Activated CD8-positive, alpha-beta T cell treated with anti-CD3 and anti-CD28 coated beads, Interleukin-2, amount 10 ng/mL, durations not matched to agents 7 days and 5 days (primary cell): ENCODE measurements at regions of chr7 and their contacts with region 1.

Region 1: GRCh38 chr7:99918959-99919813 is at the start of gene TRIM4:
- DNase-seq: peak; percentile 93
- ATAC-seq: peak; percentile 98
- H3K4me3 Mint-ChIP-seq: peak within 1 kb of the TSS; percentile 97
- H3K27ac Mint-ChIP-seq: peak within 1 kb of the TSS; percentile 98
- H3K4me1 Mint-ChIP-seq: peaks cover 40% of the 10 kb centered on the region
- H3K27me3 Mint-ChIP-seq: no peaks in the 10 kb centered on the region
- total RNA-seq, gene TRIM4: 26.7 to 28.0 TPM

Region 2: DNA sequence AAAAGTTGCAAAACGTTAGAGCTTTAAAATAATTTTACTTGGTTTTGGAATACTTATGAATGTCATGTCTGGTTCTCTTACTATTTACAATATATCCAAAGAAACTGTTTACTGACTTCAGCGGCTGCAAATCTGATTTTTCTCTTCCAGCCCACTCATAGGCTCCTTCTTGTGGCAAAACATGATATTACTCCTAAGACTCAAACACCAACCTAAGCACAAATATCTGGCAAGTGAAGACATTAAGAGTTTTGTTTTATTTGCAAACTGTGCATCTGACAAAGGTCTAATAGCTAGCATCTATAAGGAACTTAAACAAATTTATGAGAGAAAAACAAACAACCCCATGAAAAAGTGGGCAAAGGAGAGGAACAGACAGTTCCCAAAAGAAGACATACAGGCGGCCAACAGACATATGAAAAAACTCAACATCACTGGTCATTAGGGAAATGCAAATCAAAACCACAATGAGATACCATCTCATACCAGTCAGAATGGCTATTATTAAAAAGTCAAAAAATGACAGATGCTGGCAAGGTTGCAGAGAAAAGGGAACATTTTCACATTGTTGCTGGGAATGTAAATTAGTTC is 30.5 kb after region 1 on chr7:
- CTCF ChIA-PET with region 1: interaction called, 25 read pairs
- POLR2A ChIA-PET with region 1: interaction called, 4 read pairs
- DNase-seq: no peak
- ATAC-seq: no peak
- H3K4me3 Mint-ChIP-seq: no peak overlapping the region
- H3K27ac Mint-ChIP-seq: no peak overlapping the region
- H3K4me1 Mint-ChIP-seq: peaks cover 4% of the 10 kb centered on the region
- H3K27me3 Mint-ChIP-seq: peaks cover 4% of the 10 kb centered on the region

Region 3: DNA sequence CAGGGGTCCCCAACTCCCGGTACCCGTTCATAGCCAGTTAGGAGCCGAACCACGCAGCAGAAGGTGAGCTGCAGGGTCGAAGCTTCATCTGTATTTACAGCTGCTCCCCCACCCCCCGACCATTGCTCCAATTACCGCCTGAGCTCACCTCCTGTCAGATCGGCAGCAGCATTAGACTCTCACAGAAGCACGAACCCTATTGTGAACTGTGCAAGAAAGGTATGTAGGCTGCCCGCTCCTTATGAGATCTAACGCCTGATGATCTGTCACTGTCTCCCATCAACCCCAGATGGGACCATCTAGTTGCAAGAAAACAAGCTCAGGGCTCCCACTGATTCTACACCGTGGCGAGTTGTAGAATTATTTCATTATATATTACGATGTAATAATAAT is 71.3 kb after region 1 on chr7:
- CTCF ChIA-PET with region 1: interaction called, 168 read pairs
- POLR2A ChIA-PET with region 1: interaction called, 7 read pairs
- DNase-seq: no peak
- ATAC-seq: no peak
- H3K4me3 Mint-ChIP-seq: no peak overlapping the region
- H3K27ac Mint-ChIP-seq: no peak overlapping the region
- H3K4me1 Mint-ChIP-seq: peaks cover 8% of the 10 kb centered on the region
- H3K27me3 Mint-ChIP-seq: peaks cover 8% of the 10 kb centered on the region

Region 4: DNA sequence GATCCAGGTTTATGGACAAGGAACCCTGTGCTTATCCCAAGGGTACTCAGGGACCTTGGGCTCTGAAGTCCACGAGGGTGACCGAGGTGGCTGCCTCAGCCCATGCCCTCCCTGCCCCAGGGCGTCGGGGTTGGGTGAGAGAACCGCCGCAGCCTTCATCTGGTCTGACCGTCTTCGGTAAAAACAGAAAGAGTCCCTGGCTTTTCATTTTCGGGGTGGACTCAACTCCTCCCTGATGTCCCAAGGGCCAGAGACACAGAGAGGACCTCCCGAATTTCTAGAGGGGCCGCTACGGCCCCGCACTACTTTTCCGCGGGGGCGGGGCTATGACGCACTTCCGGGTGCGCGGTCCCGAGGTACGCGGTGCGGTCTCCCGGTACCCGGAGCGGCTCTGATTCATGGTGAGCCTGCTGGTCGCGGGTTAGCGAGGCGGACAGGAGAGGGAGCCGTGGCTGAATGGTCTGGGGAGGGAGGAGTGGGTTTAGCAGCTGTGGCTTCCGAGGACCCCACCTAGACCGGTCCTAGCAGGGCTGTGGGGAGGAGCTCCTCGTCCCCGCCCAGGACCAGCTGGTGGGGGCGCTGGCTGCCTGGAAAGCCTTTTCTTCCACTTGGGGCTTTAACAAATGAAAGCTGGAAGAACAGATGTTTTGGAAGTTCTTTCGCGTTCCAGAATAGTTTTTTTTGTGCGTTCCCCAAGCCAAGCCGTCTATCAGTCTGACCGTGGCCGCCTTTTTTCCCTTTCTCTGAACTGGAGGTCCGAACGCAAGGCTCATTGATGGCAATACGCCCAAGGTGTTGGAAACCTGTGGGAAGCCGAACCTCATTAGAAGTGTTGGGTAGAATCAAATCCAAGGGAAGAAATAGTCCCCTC is 130.5 kb after region 1 on chr7 and contains the start of gene ZSCAN21:
- CTCF ChIA-PET with region 1: interaction called, 16 read pairs
- POLR2A ChIA-PET with region 1: interaction called, 3 read pairs
- DNase-seq: peak; percentile 81
- ATAC-seq: peak; percentile 89
- H3K4me3 Mint-ChIP-seq: peak within 1 kb of the TSS; percentile 87
- H3K27ac Mint-ChIP-seq: peak within 1 kb of the TSS; percentile 95
- H3K4me1 Mint-ChIP-seq: peaks cover 17% of the 10 kb centered on the region
- H3K27me3 Mint-ChIP-seq: no peaks in the 10 kb centered on the region
- total RNA-seq, gene ZSCAN21: 5.8 to 7.5 TPM